Caco-2 (cell line): ENCODE measurements at regions of chr10 and their contacts with region 1.

Region 1: DNA sequence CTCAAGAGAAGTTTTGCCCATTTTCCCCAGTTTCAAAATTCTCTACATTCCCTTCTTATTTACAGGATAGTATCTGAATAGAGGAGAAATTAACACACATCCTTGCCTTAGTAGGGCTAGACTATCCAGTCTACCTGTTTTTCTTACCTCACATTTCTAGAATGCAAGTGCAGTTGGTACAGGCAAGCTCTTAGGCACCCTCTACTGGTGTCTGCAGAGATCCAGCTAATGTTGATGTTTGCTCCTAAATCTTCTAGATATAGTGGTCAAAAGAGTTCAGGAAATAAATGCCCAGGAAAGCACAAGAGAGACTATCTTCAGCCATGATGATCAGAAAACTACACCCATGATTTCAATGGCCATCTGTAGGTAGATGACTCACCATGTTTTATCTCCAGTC is 205.3 kb downstream of the HTR7 start:
- DNase-seq: peak in 1 of 2 experiments; percentile 11
- H3K4me3 ChIP-seq: no peak overlapping the region
- H3K4me3 Mint-ChIP-seq: no peak overlapping the region
- H3K27ac Mint-ChIP-seq: no peak overlapping the region
- H3K4me1 ChIP-seq: no peaks in the 10 kb centered on the region
- H3K4me1 Mint-ChIP-seq: no peaks in the 10 kb centered on the region
- H3K27me3 ChIP-seq: no peaks in the 10 kb centered on the region
- H3K27me3 Mint-ChIP-seq: peaks cover 5% of the 10 kb centered on the region
- CTCF ChIP-seq: peak in 1 of 2 experiments; percentile 45

Region 2: GRCh38 chr10:90148116-90148855 is 504.2 kb before region 1 on chr10:
- CTCF ChIA-PET with region 1: interaction called, 3 read pairs
- POLR2A ChIA-PET with region 1: no interaction called
- intact Hi-C with region 1: loop called (anchors 1 kb)
- DNase-seq: peak in 1 of 2 experiments; percentile 16
- H3K4me3 ChIP-seq: no peak overlapping the region
- H3K4me3 Mint-ChIP-seq: no peak overlapping the region
- H3K27ac Mint-ChIP-seq: no peak overlapping the region
- H3K4me1 ChIP-seq: no peaks in the 10 kb centered on the region
- H3K4me1 Mint-ChIP-seq: no peaks in the 10 kb centered on the region
- H3K27me3 ChIP-seq: no peaks in the 10 kb centered on the region
- H3K27me3 Mint-ChIP-seq: peaks cover 8% of the 10 kb centered on the region
- CTCF ChIP-seq: peak; percentile 29 to 54

Region 3: DNA sequence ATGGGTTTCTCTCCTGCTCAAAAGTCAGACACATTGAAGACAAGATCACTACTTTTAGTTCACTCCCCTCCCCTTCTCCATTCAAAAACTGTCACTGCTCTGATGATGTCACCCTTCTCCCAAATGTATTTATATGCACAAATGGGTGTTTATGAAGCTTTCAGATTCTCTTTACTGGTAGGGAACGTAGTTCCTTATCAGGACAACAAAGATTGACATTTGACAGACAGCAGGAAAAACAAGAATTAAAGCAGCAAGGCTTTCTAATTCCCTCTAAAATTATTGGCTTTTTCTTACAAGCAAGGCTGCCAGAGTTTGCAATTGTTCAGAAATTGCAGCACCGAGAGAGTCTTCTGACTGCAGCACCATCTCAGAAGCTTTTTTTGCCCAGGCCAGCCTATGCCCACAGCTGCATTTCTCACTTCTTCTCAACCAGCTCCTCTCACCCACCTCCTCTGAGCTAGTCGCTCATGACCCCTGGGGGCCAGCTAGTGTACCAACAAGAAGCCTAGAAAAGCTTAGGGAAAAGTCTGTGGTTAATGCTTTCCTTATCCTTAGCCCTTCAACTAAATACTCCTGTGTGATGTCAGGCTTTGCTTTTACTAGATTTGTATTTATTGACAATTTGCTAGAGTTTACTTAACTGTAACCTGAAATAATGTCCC is 59.7 kb before region 1 on chr10:
- CTCF ChIA-PET with region 1: no interaction called
- POLR2A ChIA-PET with region 1: no interaction called
- intact Hi-C with region 1: no loop called
- DNase-seq: peak; percentile 58 to 62
- H3K4me3 ChIP-seq: no peak overlapping the region
- H3K4me3 Mint-ChIP-seq: no peak overlapping the region
- H3K27ac Mint-ChIP-seq: no peak overlapping the region
- H3K4me1 ChIP-seq: peaks cover under 1% of the 10 kb centered on the region; the same call in 1 of the 2 replicates
- H3K4me1 Mint-ChIP-seq: peaks cover 11% of the 10 kb centered on the region
- H3K27me3 ChIP-seq: no peaks in the 10 kb centered on the region
- H3K27me3 Mint-ChIP-seq: peaks cover 14% of the 10 kb centered on the region
- CTCF ChIP-seq: peak; percentile 58 to 74

Region 4: GRCh38 chr10:90635111-90635765 is 17.3 kb before region 1 on chr10:
- CTCF ChIA-PET with region 1: no interaction called
- POLR2A ChIA-PET with region 1: no interaction called
- intact Hi-C with region 1: no loop called
- DNase-seq: no peak
- H3K4me3 ChIP-seq: no peak overlapping the region
- H3K4me3 Mint-ChIP-seq: no peak overlapping the region
- H3K27ac Mint-ChIP-seq: no peak overlapping the region
- H3K4me1 ChIP-seq: no peaks in the 10 kb centered on the region
- H3K4me1 Mint-ChIP-seq: no peaks in the 10 kb centered on the region
- H3K27me3 ChIP-seq: no peaks in the 10 kb centered on the region
- H3K27me3 Mint-ChIP-seq: peaks cover 5% of the 10 kb centered on the region
- CTCF ChIP-seq: no peak